GM10248 (cell line): ENCODE measurements at regions of chr6 and their contacts with region 1.

Region 1: GRCh38 chr6:125995972-125996580 is 9.7 kb downstream of the TRMT11 start:
- DNase-seq: peak; percentile 56
- CTCF ChIP-seq: peak; percentile 95

Region 2: GRCh38 chr6:125558907-125559306 is 437.2 kb before region 1 on chr6:
- CTCF ChIA-PET with region 1: no interaction called
- POLR2A ChIA-PET with region 1: no interaction called
- DNase-seq: no peak
- CTCF ChIP-seq: no peak

Region 3: DNA sequence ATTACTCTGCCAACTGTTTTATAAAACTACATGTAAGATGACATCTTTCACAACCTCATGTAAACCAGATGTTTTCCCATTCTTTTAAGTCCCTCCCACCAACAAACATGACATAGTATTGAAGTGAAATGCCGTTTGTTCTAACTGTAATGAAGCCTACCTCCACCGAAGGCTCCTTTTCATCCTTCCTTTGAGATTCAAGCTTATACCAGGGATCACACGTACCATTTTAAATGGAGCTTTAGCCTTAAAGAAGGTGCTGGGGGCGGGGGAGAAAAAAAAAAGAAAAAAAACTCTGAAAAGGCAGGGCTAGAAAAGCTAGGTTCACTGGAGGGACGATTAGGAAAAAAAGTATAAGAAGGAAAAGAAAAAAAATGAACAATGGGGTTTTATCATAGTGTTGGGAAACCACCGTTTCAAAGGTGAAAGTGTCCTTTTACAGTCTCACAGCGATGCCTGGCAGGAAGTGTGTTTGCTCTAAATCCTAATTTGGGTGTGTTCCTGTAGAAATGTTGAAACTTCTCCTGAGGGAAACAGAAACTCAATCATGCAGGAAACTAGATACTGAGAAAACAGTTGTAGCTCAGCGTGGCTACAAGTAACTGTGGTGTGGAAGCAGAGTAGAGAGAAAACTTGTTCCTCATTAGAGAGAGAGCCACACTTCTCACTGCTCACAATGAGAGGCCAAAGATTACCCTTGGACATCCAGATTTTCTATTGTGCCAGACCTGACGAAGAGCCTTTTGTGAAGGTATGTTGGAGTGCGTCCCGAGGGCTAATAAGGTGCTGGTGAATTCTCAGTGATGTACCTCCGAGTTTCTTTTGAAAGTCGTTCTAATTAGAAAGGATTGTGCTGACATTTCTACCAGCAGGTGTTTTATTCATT is 77.2 kb before region 1 on chr6:
- CTCF ChIA-PET with region 1: no interaction called
- POLR2A ChIA-PET with region 1: no interaction called
- DNase-seq: peak; percentile 71
- CTCF ChIP-seq: no peak

Region 4: GRCh38 chr6:126015863-126016262 is 19.8 kb after region 1 on chr6:
- CTCF ChIA-PET with region 1: interaction called, 21 read pairs
- POLR2A ChIA-PET with region 1: no interaction called
- DNase-seq: no peak
- CTCF ChIP-seq: no peak

Region 5: GRCh38 chr6:126170978-126171382 is 174.9 kb after region 1 on chr6:
- CTCF ChIA-PET with region 1: interaction called, 12 read pairs
- POLR2A ChIA-PET with region 1: no interaction called
- DNase-seq: peak; percentile 32
- CTCF ChIP-seq: peak; percentile 44

Region 6: DNA sequence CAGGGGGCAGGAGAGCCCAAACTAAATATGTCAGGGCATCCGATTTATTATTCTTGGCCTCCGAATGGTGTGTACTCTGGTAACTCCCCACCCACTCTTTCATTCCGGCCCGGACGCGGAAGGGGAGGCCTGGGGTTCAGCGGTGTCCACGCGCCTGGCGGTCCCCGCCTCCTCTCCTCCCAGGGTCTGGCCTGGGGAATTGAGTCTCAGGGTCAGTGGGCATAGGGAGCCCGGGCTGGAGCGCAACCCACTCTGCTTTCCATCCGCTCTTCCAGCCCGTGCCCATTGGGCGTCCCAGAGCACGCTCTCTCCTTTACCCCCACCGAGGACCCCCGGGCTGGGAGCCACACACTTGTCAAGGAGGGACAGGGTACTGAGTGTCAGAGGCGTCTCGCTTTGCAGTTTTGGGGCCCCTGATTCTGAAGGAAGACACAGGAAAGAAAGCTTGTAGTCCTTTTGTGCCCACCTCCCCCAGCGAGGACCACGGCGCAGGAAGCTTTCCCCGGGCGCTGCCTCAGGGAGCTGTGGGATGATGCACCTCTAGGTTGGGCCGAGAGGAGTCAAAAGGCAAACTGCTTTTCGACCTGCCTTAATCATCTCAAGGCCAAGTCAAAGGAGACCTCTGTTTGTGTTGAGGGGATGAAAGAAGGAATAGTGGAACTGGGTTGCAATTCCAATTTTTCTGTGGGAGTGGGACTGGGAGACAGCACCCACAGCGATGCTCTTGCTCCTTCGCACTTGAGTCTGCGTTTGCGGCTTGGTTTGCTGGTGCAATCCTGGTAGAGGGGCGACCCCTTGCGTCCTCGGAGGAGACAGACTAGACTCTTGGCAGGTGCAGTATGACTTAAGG is 1124.9 kb after region 1 on chr6:
- CTCF ChIA-PET with region 1: interaction called, 14 read pairs
- POLR2A ChIA-PET with region 1: no interaction called
- DNase-seq: peak; percentile 76
- CTCF ChIP-seq: peak; percentile 92